Activated CD4-positive, alpha-beta T cell treated with anti-CD3 and anti-CD28 coated beads for 36 hours (primary cell): ENCODE measurements at regions of chr13 and their contacts with region 1.

Region 1: GRCh38 chr13:110412132-110412914 is 105.2 kb downstream of the COL4A2 start:
- DNase-seq: peak; percentile 87
- ATAC-seq: peak; percentile 86
- H3K4me3 Mint-ChIP-seq: no peak overlapping the region
- H3K27ac Mint-ChIP-seq: no peak overlapping the region
- H3K4me1 Mint-ChIP-seq: peaks cover 7% of the 10 kb centered on the region
- H3K27me3 Mint-ChIP-seq: peaks cover 71% of the 10 kb centered on the region

Region 2: GRCh38 chr13:110220471-110220870 is 191.9 kb before region 1 on chr13:
- CTCF ChIA-PET with region 1: interaction called, 28 read pairs
- POLR2A ChIA-PET with region 1: no interaction called
- intact Hi-C with region 1: loop called (anchors 1 kb)
- DNase-seq: no peak
- ATAC-seq: no peak
- H3K4me3 Mint-ChIP-seq: no peak overlapping the region
- H3K27ac Mint-ChIP-seq: no peak overlapping the region
- H3K4me1 Mint-ChIP-seq: no peaks in the 10 kb centered on the region
- H3K27me3 Mint-ChIP-seq: peaks cover 32% of the 10 kb centered on the region

Region 3: DNA sequence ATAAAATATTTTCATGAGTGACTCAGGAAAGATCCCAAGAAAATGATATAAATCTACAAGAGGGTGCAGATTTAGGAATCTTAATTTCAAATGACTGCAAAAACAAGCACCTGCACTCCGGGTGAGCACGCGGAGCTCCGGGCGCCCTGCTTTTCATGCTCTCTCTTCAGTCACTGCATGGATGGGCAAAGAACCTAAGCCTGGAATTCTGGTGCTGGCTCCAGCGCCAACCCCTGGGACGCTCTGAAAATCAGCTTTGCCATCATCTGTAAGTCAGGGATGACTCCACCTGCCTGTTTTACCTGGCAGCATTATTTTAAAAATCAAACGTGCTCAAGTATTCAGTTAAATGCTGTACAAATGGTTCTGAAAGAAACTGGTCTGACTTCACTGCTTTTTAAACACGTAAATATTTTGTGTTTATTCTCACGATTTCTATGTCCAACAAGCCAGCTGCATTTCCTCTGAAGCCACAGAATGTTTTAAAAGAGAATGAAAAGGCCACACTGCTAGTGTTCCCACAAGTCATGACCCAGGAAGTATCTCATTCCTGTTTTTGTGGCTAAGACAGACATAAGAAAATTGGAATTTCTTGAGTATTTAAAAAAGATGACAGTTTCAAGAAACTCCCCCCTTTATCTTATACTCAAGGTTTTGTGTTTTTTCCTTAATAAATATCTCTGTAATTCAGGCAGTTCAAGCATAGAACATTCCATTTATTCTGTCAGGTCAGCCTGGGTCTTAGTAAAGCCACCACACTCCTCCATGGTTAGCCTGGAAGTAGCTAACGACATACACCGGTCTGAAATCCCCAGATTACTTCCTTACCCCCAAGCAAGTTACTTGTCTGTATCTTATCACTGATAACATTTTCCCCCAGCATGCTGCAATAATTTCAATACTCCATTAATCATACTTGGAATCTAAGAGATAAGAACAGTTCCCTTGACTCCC is 186.4 kb before region 1 on chr13:
- CTCF ChIA-PET with region 1: interaction called, 28 read pairs
- POLR2A ChIA-PET with region 1: no interaction called
- intact Hi-C with region 1: loop called (anchors 1 kb)
- DNase-seq: no peak
- ATAC-seq: no peak
- H3K4me3 Mint-ChIP-seq: no peak overlapping the region
- H3K27ac Mint-ChIP-seq: no peak overlapping the region
- H3K4me1 Mint-ChIP-seq: no peaks in the 10 kb centered on the region
- H3K27me3 Mint-ChIP-seq: peaks cover 20% of the 10 kb centered on the region

Region 4: DNA sequence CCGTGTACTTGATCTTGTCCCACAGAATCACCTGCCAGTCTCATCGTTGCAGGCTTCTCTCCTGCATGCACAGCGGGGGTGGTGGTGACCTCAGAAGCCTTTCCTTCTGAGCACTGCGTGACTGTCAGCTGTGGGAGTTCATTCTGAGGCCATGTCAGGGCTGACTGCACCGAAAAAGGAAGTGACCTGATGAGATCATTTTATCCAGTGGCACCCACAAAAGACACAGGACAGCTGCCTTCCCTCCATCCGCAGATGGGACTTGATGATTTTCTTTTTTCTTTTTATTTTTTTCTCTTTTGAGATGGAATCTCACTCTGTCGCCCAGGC is 59.5 kb after region 1 on chr13:
- CTCF ChIA-PET with region 1: no interaction called
- POLR2A ChIA-PET with region 1: no interaction called
- intact Hi-C with region 1: no loop called
- DNase-seq: peak; percentile 59
- ATAC-seq: peak; percentile 86
- H3K4me3 Mint-ChIP-seq: no peak overlapping the region
- H3K27ac Mint-ChIP-seq: no peak overlapping the region
- H3K4me1 Mint-ChIP-seq: peaks cover 2% of the 10 kb centered on the region
- H3K27me3 Mint-ChIP-seq: peaks cover 18% of the 10 kb centered on the region